Activated CD4-positive, alpha-beta T cell treated with anti-CD3 and anti-CD28 coated beads, Interleukin-2, amount 10 ng/mL, durations not matched to agents 24 days and 14 days (primary cell): ENCODE measurements at regions of chr17 and their contacts with region 1.

Region 1: DNA sequence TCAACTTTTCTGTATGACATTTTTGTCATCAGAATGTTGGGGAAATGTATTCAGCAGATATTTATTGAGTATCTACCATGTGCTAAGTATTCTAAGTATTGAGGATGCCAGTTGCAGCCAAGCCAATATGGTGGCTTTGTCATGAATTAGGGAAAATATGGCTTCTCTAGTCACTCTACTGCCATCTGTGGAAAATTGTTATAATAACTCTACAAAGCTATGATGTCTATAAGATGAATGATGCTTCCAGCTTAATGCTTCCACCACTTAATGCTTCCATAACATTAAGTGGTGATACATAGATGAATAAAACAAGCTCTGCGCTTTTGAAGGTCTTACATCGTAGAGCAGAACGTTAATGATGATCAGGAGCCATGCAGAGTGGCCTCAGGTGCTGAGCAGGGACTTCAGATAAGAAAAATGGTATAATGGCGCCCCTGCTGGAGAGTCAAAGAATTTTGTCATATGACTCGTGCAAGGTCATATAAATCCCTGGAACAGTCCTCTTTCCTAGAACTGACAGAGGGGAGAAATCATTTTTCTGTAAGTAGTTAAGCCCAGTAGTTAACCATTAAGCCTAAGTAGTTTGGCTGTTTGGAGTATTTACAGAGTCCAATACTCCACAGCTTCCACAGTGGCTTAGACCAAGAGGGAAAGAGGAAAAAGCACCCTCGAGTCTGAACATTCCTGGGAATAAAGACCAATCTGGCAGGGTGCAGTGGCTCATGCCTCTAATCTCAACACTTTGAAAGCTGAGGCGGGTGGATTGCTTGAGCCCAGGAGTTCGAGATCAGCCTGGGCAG is 2.7 kb upstream of the TMIGD1 start:
- DNase-seq: peak; percentile 88
- H3K4me3 Mint-ChIP-seq: no peak overlapping the region
- H3K27ac Mint-ChIP-seq: no peak overlapping the region
- H3K4me1 Mint-ChIP-seq: peaks cover 33% of the 10 kb centered on the region
- H3K27me3 Mint-ChIP-seq: peaks cover 8% of the 10 kb centered on the region

Region 2: DNA sequence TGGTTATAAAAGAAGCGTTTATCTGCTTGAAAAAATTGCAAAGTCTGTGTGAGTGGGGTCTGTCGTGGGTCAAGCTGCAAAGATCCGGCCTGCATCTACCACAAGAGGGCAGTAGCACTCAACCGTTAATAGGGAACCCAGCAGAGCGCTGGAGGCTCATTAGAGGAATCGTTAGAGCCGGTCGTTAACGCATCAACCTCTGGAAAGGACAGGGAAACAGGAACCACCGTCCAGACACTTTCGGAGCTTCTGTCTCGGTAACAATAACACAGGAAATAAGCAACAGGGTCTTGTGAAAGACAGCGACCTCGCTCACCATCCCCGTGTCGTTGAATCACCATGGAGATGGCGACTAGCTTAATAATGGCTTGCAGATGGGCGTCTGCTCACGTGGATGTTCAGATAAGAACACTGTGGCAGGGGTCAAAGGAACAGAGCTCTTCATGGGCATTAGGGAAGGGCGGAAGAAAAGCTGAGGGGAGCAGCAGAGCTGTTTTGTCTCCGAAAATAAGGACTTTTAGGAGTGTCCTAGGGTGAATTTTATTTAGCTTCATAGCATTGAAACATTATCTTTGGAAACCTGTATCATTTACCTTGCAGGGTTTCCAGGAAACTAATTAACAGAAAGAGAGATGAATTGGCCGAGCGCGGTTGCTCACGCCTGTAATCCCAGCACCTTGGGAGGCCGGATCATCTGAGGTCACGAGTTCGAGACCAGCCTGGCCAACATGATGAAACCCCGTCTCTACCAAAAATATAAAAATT is 231.8 kb before region 1 on chr17:
- intact Hi-C with region 1: loop called (anchors 1 kb)
- DNase-seq: peak; percentile 91
- H3K4me3 Mint-ChIP-seq: peak overlapping the region; percentile 81
- H3K27ac Mint-ChIP-seq: no peak overlapping the region
- H3K4me1 Mint-ChIP-seq: peaks cover 5% of the 10 kb centered on the region
- H3K27me3 Mint-ChIP-seq: peaks cover 16% of the 10 kb centered on the region

Region 3: GRCh38 chr17:30124273-30124796 is 212.2 kb before region 1 on chr17:
- intact Hi-C with region 1: loop called (anchors 1 kb)
- DNase-seq: peak; percentile 52
- H3K4me3 Mint-ChIP-seq: no peak overlapping the region
- H3K27ac Mint-ChIP-seq: no peak overlapping the region
- H3K4me1 Mint-ChIP-seq: peaks cover 24% of the 10 kb centered on the region
- H3K27me3 Mint-ChIP-seq: no peaks in the 10 kb centered on the region

Region 4: DNA sequence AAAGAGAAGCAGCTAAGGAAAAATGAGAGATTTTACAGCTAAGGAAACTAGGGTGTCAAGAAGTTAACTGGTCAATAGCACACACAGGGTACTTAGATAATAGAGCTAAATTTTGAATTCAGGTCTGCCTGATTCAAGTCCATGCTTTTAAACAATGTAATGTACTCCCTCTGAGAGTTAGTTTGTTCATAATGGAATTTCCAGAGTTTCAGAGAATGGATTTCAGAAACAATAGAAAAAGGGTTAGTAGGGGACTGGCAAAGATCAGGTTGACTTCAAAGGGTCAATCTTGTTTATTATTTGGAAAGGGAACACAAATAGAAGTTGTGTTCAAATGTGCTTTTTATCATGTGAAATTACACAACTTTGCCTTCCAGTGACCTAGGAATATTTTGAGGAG is 202.0 kb before region 1 on chr17:
- intact Hi-C with region 1: no loop called
- DNase-seq: no peak
- H3K4me3 Mint-ChIP-seq: no peak overlapping the region
- H3K27ac Mint-ChIP-seq: peak overlapping the region; percentile 27
- H3K4me1 Mint-ChIP-seq: peaks cover 22% of the 10 kb centered on the region
- H3K27me3 Mint-ChIP-seq: no peaks in the 10 kb centered on the region

Region 5: GRCh38 chr17:30363715-30364202 is 27.2 kb after region 1 on chr17:
- intact Hi-C with region 1: loop called (anchors 1 kb)
- DNase-seq: peak; percentile 92
- H3K4me3 Mint-ChIP-seq: peak overlapping the region; percentile 36
- H3K27ac Mint-ChIP-seq: peak overlapping the region; percentile 89
- H3K4me1 Mint-ChIP-seq: peaks cover 26% of the 10 kb centered on the region
- H3K27me3 Mint-ChIP-seq: peaks cover 3% of the 10 kb centered on the region

Region 6: DNA sequence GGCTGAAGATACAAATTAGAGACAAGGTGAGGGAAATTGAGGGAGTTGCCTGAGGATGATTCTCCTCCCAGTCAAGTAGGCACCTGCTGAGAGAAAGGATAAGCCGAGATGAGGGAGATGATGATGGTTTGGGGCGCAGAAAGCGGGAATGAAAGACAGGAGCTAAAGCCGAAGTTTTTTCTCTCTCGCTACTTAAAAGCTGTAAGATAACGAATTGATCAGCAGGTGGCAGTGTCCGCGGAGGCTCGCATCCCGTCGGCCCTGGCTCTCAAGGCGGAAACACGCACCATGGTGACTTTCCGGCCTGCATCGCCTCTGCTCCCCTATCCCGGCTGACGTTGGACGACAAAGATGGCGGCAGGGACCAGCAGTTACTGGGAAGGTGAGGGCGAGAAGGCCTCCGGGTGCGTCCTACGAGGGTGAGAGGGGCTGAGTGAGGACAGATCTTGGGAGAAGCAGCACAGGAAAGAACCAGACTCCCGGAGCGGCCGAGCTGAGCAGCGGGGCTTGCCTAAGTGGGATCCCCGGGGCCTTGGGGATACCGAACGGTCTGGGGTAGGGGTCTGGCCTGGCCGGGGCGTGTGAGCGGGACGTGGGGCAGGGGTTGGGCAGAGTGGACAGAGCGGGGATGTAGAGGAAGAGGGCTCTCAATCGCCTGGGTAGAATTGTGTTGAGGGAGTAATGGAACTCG is 140.7 kb after region 1 on chr17 and contains the start of gene GOSR1:
- intact Hi-C with region 1: loop called (anchors 2 kb)
- DNase-seq: peak; percentile 97
- H3K4me3 Mint-ChIP-seq: peak within 1 kb of the TSS; percentile 99
- H3K27ac Mint-ChIP-seq: peak within 1 kb of the TSS; percentile 94
- H3K4me1 Mint-ChIP-seq: peaks cover 29% of the 10 kb centered on the region
- H3K27me3 Mint-ChIP-seq: peaks cover 2% of the 10 kb centered on the region
- total RNA-seq, gene GOSR1: 54.8 and 55.6 TPM in 2 replicates